RWPE1 (cell line): ENCODE measurements at regions of chr6 and their contacts with region 1.

Region 1: DNA sequence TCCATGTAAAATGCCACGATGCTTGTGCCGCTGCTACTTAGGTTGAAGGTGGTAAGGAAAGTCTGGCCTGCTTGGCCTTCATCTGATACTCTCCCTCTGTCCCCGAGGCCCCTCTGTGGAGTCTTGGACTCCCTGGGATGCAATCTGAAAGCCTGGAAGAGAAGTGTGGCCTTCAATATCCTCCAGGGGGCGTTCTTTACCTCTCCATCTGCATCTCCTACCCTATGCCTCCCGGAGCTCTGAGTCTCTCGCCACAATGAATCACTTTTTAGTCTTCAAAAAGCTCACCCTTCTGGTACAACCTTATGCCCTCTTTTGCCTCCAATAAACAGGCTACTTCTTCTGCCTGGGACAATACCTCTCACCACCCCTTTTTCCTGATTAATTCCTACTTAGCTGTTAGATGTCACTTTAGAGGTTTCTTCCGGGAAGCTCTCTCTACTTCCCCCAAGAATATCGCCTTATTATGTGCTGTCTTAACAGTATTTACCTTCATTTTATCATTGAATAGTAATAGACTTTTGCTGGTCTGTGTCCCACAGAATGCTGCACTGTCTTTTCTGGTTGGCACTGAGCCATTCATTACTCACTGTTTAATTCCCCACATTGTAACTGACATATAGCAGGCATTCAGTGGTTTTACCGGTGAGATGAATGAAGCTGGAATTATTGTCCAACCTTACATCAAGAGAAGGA is 13.9 kb upstream of the ATG5 start:
- DNase-seq: peak; percentile 88
- H3K27ac ChIP-seq: no peak overlapping the region
- CTCF ChIP-seq: peak; percentile 79

Region 2: GRCh38 chr6:106037060-106037459 is 302.4 kb before region 1 on chr6:
- CTCF ChIA-PET with region 1: no interaction called
- POLR2A ChIA-PET with region 1: no interaction called
- DNase-seq: peak; percentile 26
- H3K27ac ChIP-seq: no peak overlapping the region
- CTCF ChIP-seq: no peak

Region 3: DNA sequence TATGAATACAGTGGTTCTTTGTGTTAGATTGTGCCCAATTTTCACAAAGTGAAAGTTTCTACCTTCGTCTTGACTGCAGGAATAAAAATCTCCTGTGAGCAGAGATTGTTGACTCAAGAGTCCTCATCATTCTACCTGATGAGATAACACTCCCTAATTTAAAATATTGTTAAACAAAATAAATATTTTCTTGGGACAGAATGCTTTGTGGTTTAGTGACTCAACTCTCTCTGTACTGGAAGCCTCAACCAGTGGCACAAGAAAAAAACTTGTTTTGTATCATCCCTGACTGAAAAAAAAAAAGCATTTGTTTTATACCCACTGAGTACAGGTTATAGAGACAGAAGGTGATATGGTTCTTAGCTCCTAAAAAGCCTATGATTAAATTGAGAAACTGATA is 100.0 kb after region 1 on chr6:
- CTCF ChIA-PET with region 1: interaction called, 11 read pairs
- POLR2A ChIA-PET with region 1: no interaction called
- DNase-seq: peak; percentile 33
- H3K27ac ChIP-seq: no peak overlapping the region
- CTCF ChIP-seq: no peak